ENCODE measurements at regions of chr2 and their contacts with region 1.

Region 1: GRCh38 chr2:218257390-218257981 is 3.3 kb upstream of the GPBAR1 start:
- DNase-seq: no peak
- ATAC-seq: peak in 1 of 4 donors; percentile 6
- H3K4me3 ChIP-seq: no peak overlapping the region
- H3K27ac ChIP-seq: peak overlapping the region in 7 of 12 donors; percentile 7 to 88 (median 49)
- H3K4me1 ChIP-seq: peaks cover 3 to 58% (median 45%) of the 10 kb centered on the region in 12 donors
- H3K27me3 ChIP-seq: no peaks in the 10 kb centered on the region
- CTCF ChIP-seq: peak; percentile 24 to 55 (median 38)
- POLR2A ChIP-seq: no peak

Region 2: GRCh38 chr2:217798743-217799562 is 458.5 kb before region 1 on chr2:
- intact Hi-C with region 1: no loop called
- DNase-seq: peak in 1 of 5 donors; percentile 47
- ATAC-seq: no peak
- H3K4me3 ChIP-seq: no peak overlapping the region
- H3K27ac ChIP-seq: peak overlapping the region in 7 of 12 donors; percentile 1 to 77 (median 16)
- H3K4me1 ChIP-seq: peaks cover 3 to 90% (median 48%) of the 10 kb centered on the region in 12 donors
- H3K27me3 ChIP-seq: no peaks in the 10 kb centered on the region
- CTCF ChIP-seq: no peak
- POLR2A ChIP-seq: no peak

Region 3: DNA sequence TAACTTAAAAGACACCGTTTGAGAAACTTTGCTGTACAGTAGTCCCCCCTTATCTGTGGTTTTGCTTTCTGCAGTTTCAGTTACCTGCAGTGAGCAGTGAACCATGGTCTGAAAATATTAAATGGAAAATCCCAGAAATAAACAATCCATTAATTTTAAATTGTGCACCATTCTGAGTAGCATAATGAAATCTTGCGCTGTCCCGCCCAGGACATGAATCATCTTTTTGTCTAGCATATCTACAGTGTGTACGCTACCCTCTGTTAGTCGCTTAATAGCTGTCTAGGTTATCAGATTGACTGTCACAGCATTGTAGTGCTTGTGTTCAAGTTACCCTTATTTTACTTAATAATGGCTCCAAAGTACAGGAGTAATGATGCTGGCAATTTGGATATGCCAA is 34.4 kb before region 1 on chr2:
- intact Hi-C with region 1: loop called in 7 of 10 experiments (anchors 5 to 10 kb)
- DNase-seq: no peak
- ATAC-seq: peak in 1 of 4 donors; percentile 35
- H3K4me3 ChIP-seq: peak overlapping the region in 1 of 12 donors; percentile 18
- H3K27ac ChIP-seq: peak overlapping the region in 1 of 12 donors; percentile 38
- H3K4me1 ChIP-seq: peaks cover 0 to 98% (median 50%) of the 10 kb centered on the region in 12 donors
- H3K27me3 ChIP-seq: no peaks in the 10 kb centered on the region
- CTCF ChIP-seq: no peak
- POLR2A ChIP-seq: no peak

Region 4: GRCh38 chr2:218229239-218229638 is 28.2 kb before region 1 on chr2:
- intact Hi-C with region 1: loop called in 5 of 10 experiments (anchors 5 kb)
- DNase-seq: no peak
- ATAC-seq: peak in 3 of 4 donors; percentile 76 to 90 (median 88)
- H3K4me3 ChIP-seq: peak overlapping the region in 2 of 12 donors; percentile 3 to 22
- H3K27ac ChIP-seq: peak overlapping the region in 11 of 12 donors; percentile 3 to 86 (median 47)
- H3K4me1 ChIP-seq: peaks cover 8 to 84% (median 31%) of the 10 kb centered on the region in 12 donors
- H3K27me3 ChIP-seq: no peaks in the 10 kb centered on the region
- CTCF ChIP-seq: no peak
- POLR2A ChIP-seq: no peak

Region 5: GRCh38 chr2:218244665-218245064 is 12.8 kb before region 1 on chr2:
- intact Hi-C with region 1: no loop called
- DNase-seq: no peak
- ATAC-seq: peak in 3 of 4 donors; percentile 27 to 31 (median 30)
- H3K4me3 ChIP-seq: no peak overlapping the region
- H3K27ac ChIP-seq: peak overlapping the region in 6 of 12 donors; percentile 3 to 67 (median 47)
- H3K4me1 ChIP-seq: peaks cover 0 to 36% (median 20%) of the 10 kb centered on the region in 12 donors
- H3K27me3 ChIP-seq: no peaks in the 10 kb centered on the region
- CTCF ChIP-seq: no peak
- POLR2A ChIP-seq: no peak

Region 6: GRCh38 chr2:218557941-218558340 is 300.5 kb after region 1 on chr2:
- intact Hi-C with region 1: no loop called
- DNase-seq: no peak
- ATAC-seq: no peak
- H3K4me3 ChIP-seq: no peak overlapping the region
- H3K27ac ChIP-seq: peak overlapping the region in 1 of 12 donors; percentile 56
- H3K4me1 ChIP-seq: peaks cover 0 to 13% (median 0%) of the 10 kb centered on the region in 12 donors
- H3K27me3 ChIP-seq: no peaks in the 10 kb centered on the region
- CTCF ChIP-seq: no peak
- POLR2A ChIP-seq: no peak

Region 7: GRCh38 chr2:218733171-218734021 is 475.9 kb after region 1 on chr2:
- intact Hi-C with region 1: no loop called
- DNase-seq: peak in 1 of 5 donors; percentile 48
- ATAC-seq: peak in 3 of 4 donors; percentile 59 to 87 (median 66)
- H3K4me3 ChIP-seq: no peak overlapping the region
- H3K27ac ChIP-seq: peak overlapping the region in 3 of 12 donors; percentile 9 to 93 (median 61)
- H3K4me1 ChIP-seq: peaks cover 0 to 56% (median 6%) of the 10 kb centered on the region in 12 donors
- H3K27me3 ChIP-seq: no peaks in the 10 kb centered on the region
- CTCF ChIP-seq: no peak
- POLR2A ChIP-seq: no peak